Mammary epithelial cell (primary cell): ENCODE measurements at regions of chr15 and their contacts with region 1.

Region 1: GRCh38 chr15:75229191-75230015 is 27.7 kb downstream of the C15orf39 start:
- DNase-seq: no peak
- H3K4me3 ChIP-seq: no peak overlapping the region
- H3K27ac ChIP-seq: no peak overlapping the region
- H3K4me1 ChIP-seq: no peaks in the 10 kb centered on the region
- H3K27me3 ChIP-seq: no peaks in the 10 kb centered on the region
- CTCF ChIP-seq: no peak

Region 2: GRCh38 chr15:74680456-74680855 is 548.9 kb before region 1 on chr15:
- CTCF ChIA-PET with region 1: interaction called, 27 read pairs
- dilution Hi-C with region 1: no loop called
- in situ Hi-C with region 1: no loop called
- intact Hi-C with region 1: no loop called
- DNase-seq: no peak
- H3K4me3 ChIP-seq: no peak overlapping the region
- H3K27ac ChIP-seq: no peak overlapping the region
- H3K4me1 ChIP-seq: no peaks in the 10 kb centered on the region
- H3K27me3 ChIP-seq: no peaks in the 10 kb centered on the region
- CTCF ChIP-seq: no peak

Region 3: DNA sequence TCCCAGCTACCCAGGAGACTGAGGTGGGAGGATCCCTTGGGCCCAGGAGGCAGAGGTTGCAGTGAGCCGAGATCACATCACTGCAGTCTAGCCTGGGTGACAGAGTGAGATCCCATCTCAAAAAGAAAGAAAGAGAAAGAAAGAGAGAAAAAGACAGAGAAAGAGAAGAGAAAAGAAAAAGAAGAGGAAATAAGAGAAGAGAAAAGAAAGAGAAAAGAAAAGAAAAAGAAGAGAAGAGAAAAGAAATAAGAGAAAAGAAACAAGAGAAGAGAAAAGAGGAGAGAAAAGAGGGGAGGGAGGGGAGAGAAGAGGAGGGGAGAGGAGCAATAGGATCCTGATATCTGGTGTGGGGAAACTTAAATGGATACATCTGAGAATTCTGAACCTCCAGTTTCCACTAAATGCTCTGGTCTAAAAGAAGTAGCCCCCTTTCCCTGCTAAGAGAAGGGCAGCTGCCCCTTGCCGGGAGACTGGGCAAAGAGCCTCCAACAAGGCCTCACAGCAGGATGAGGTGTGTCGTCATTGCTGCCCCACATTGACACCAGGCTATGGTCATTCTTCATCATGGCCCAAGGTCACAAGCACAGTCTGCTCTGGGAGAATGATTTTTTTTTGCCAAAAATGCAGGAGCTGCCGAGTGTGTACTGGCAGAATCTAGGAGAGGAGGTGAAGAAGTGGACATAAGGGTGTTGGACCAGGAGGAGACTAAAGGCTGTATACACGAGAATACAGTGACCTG is 85.3 kb after region 1 on chr15:
- CTCF ChIA-PET with region 1: no interaction called
- dilution Hi-C with region 1: no loop called
- in situ Hi-C with region 1: loop called in 1 of 2 experiments (anchors 5 kb)
- intact Hi-C with region 1: no loop called
- DNase-seq: no peak
- H3K4me3 ChIP-seq: no peak overlapping the region
- H3K27ac ChIP-seq: no peak overlapping the region
- H3K4me1 ChIP-seq: peaks cover 6% of the 10 kb centered on the region
- H3K27me3 ChIP-seq: peaks cover 3% of the 10 kb centered on the region
- CTCF ChIP-seq: no peak